Dorsolateral prefrontal cortex (tissue), 120 donors: ENCODE measurements at regions of chr17 and their contacts with region 1.

Region 1: GRCh38 chr17:18141210-18141803 is 32.8 kb downstream of the MYO15A start:
- DNase-seq: peak in 1 of 10 donors; percentile 28
- H3K4me3 ChIP-seq: no peak overlapping the region
- H3K27ac ChIP-seq: no peak overlapping the region
- H3K27me3 ChIP-seq: no peaks in the 10 kb centered on the region
- CTCF ChIP-seq: peak; percentile 42 to 78 (median 69)

Region 2: DNA sequence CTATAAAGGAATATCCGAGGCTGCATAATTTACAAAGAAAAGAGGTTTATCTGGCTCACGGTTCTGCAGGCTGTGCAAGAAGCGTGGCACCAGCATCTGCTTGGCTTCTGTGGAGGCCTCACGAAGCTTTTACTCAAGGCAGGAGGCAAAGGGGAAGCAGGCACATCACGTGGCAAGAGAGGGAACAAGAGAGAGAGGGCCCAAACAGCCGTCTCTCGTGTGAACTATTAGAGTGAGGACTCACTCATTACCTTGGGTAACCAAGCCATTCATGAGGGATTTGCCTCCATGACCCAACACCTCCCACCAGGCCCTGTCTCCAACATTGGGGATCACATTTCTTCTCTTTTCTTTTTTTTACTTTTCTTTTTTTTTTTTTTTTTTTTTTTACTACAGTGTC is 34.9 kb after region 1 on chr17:
- intact Hi-C with region 1: loop called (anchors 5 kb)
- DNase-seq: peak in 1 of 10 donors; percentile 20
- H3K4me3 ChIP-seq: no peak overlapping the region
- H3K27ac ChIP-seq: no peak overlapping the region
- H3K27me3 ChIP-seq: no peaks in the 10 kb centered on the region
- CTCF ChIP-seq: no peak

Region 3: DNA sequence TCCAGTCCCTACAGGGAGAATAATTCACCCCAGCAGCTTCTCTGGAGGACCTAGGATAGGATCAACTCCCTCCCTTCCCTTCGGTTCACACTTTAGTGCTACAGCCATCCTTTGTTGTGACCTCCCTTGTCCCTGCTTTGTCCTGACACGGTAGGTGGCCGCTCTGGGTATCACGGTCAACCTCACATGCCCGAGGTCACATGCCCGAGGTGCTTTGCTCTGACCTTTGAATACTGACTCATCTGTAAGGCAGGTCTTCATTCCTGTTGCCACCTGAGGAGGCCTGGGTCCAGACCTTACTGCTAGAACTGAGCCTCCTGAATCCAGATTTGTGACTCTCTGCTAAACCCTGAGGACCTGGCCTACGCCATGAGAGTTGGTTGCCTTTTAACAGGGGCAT is 62.0 kb after region 1 on chr17:
- intact Hi-C with region 1: no loop called
- DNase-seq: no peak
- H3K4me3 ChIP-seq: no peak overlapping the region
- H3K27ac ChIP-seq: peak overlapping the region in 1 of 59 donors; percentile 5
- H3K27me3 ChIP-seq: no peaks in the 10 kb centered on the region
- CTCF ChIP-seq: no peak

Region 4: DNA sequence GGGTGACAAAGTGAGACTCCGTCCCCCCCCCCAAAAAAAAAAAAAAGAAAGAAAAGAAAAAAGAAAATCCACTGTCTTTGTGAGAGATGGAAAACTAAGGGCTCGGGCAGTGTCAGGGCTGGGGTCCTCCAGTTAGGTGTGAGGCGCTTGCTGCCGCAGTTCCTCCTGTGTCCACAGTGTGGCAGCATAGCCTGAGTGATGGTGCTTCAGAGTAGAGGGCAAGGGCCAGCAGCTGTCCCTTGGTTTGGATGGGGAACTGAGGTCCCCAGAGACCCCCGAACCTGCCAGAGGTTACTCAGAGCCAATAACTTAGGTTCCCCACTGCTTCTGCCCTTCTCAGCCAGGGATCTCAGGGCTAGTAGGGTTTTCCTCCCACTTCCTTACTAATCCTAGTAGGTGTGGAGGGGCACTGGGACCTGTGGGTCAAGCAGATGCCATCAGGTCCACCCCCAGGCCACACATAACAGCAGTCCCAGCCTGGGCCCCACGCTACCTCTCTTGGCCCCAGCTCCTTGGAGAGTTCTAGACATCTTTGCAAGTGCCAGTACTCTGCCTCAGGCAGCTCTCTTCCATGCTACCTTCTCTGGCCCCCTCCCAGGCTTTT is 76.2 kb after region 1 on chr17:
- intact Hi-C with region 1: loop called in 1 of 2 experiments (anchors 5 kb)
- DNase-seq: peak; percentile 60 to 89 (median 82)
- H3K4me3 ChIP-seq: no peak overlapping the region
- H3K27ac ChIP-seq: peak overlapping the region in 2 of 59 donors; percentile 7 to 53
- H3K27me3 ChIP-seq: no peaks in the 10 kb centered on the region
- CTCF ChIP-seq: peak; percentile 55 to 95 (median 88)